BJ (cell line): ENCODE measurements at regions of chr2 and their contacts with region 1.

Region 1: GRCh38 chr2:218852911-218853667 is 6.5 kb upstream of the WNT6 start:
- DNase-seq: no peak
- H3K4me3 ChIP-seq: no peak overlapping the region
- H3K27me3 ChIP-seq: peaks cover 39% of the 10 kb centered on the region
- CTCF ChIP-seq: peak; percentile 78

Region 2: DNA sequence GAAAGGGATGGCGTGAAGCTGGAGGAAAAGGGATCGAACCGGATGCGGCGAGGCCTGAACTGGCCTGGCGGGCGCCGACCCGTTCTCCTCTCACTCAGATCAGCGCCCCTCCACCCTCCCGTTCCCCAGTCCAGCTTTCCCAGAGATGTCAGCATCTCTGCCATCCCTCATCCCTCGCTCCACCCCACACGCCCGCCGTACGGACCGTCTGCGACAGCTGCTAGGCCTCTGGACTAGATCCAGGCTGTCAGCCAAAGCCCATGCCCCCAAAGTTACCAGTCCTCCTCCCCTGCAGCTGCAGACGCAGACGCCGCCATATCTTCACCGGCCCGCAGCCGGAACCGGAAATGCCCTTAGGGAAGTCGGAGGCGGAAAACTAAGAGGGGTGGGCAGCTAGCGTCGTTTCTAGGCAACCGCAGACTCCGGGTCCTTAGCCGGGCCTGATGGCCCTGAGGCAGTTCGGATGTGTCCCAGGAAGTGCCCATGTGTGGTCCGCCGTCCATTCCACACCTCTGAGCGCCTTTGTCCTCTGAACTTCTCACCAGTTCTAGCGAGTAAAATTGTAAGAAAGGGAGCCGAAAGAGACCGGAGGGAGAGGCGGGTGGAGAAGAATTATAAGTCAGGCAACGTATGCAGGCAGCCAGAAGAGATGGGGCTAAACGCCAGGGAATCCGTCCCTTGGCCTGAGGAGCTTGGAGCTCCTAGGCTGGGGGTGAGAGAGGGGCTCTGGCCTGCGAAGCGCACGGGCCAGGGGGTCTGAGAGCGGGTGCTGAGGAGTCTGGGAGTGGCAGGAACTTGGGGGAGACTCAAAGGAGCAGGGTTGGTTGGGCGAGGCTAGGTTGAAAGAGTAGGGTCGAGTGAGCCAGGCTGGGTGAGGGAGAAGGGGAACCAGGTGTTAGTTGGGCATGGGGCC is 181.2 kb before region 1 on chr2 and contains the starts of genes RNF25 and STK36:
- CTCF ChIA-PET with region 1: interaction called, 25 read pairs
- POLR2A ChIA-PET with region 1: no interaction called
- DNase-seq: peak; percentile 63
- H3K4me3 ChIP-seq: peak within 1 kb of the TSS; percentile 95
- H3K27me3 ChIP-seq: no peaks in the 10 kb centered on the region
- CTCF ChIP-seq: no peak
- polyA plus RNA-seq, gene RNF25: 78.2 and 91.6 TPM in 2 replicates
- polyA plus RNA-seq, gene STK36: 38.1 and 58.7 TPM in 2 replicates

Region 3: GRCh38 chr2:218710687-218711549 is 142.2 kb before region 1 on chr2 and contains the start of gene TTLL4:
- CTCF ChIA-PET with region 1: interaction called, 41 read pairs
- POLR2A ChIA-PET with region 1: no interaction called
- DNase-seq: peak; percentile 64
- H3K4me3 ChIP-seq: peak within 1 kb of the TSS; percentile 68
- H3K27me3 ChIP-seq: no peaks in the 10 kb centered on the region
- CTCF ChIP-seq: peak; percentile 78
- polyA plus RNA-seq, gene TTLL4: 12.9 and 14.1 TPM in 2 replicates

Region 4: DNA sequence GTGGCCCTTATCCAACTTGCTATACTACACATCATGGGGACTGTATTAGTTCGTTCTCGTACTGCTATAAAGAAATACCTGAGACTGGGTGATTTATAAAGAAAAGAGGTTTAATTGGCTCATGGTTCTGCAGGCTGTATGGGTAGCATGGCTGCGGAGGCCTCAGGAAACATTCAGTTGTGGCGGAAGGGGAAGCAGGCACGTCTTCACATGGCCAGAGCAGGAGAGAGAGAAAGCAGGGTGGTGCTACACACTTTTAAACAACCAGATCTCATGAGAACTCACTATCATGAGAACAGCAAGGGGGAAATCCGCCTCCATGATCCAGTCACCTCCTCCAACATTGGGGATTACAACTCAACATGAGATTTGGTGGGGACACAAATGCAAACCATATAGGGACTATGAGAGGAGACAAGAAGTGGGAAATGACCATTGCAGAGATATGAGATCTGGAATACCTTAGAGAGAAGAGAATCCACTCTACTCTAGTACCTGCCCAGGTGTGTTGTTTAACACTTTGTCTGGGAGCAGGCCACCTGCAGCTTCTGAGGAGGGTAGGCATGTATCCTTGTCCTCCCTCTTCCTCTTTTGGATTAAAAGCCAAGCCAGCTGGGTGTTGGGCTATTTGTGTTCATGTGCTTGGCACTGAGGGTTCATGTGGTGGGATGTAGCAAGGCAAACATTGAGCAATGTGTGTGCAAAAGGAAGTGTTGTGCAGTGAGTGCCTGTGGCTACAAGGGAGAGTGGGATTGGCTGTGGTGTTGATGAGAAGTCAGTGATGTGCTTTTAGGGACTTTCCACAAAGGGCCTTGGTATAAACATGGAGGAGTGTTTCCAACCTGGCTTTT is 119.7 kb before region 1 on chr2:
- CTCF ChIA-PET with region 1: interaction called, 39 read pairs
- POLR2A ChIA-PET with region 1: no interaction called
- DNase-seq: no peak
- H3K4me3 ChIP-seq: no peak overlapping the region
- H3K27me3 ChIP-seq: no peaks in the 10 kb centered on the region
- CTCF ChIP-seq: no peak

Region 5: DNA sequence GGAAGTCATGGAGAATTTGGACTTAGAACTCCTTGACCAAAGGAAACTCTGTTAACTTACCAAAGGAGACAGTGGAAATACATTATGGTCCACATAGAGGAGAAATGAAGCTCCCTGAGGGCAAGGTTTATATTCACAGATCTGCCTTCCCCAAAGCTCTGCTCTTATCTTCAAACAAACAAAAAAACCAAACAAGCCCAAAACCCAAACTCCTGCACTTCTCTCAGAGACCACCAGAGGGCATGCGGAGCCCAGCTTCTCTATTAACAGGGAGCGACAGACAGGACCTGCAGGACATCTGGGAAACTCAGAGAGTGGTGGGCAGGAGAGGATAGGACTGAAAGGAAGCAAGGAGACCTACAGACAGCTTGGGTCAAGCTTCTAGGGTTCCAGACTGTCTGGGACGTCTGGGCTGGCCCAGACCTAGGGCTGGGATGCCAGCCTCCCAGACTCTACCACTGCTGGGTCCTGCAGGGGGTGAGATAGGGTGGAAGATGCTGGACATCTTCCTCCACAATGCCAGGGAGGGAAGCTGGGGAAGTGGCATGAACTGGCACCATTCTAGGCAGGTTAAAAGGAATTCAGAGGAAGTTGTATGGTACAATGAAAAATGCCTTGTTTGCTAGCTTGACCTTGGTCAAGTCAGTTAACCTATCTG is 23.6 kb after region 1 on chr2:
- CTCF ChIA-PET with region 1: interaction called, 83 read pairs
- POLR2A ChIA-PET with region 1: no interaction called
- DNase-seq: no peak
- H3K4me3 ChIP-seq: no peak overlapping the region
- H3K27me3 ChIP-seq: peaks cover 62% of the 10 kb centered on the region
- CTCF ChIP-seq: peak; percentile 94

Region 6: GRCh38 chr2:219388127-219388844 is 535.2 kb after region 1 on chr2:
- CTCF ChIA-PET with region 1: no interaction called
- POLR2A ChIA-PET with region 1: no interaction called
- DNase-seq: peak; percentile 69
- H3K4me3 ChIP-seq: peak overlapping the region; percentile 42
- H3K27me3 ChIP-seq: no peaks in the 10 kb centered on the region
- CTCF ChIP-seq: peak; percentile 43